CD4-positive, alpha-beta memory T cell (primary cell): ENCODE measurements at regions of chr5 and their contacts with region 1.

Region 1: GRCh38 chr5:77560677-77561263 is 68.7 kb upstream of the WDR41 start:
- DNase-seq: peak in 1 of 5 donors; percentile 4
- H3K4me3 ChIP-seq: no peak overlapping the region
- H3K4me3 Mint-ChIP-seq: no peak overlapping the region
- H3K27ac ChIP-seq: no peak overlapping the region
- H3K27ac Mint-ChIP-seq: no peak overlapping the region
- H3K4me1 ChIP-seq: no peaks in the 10 kb centered on the region
- H3K4me1 Mint-ChIP-seq: no peaks in the 10 kb centered on the region
- H3K27me3 ChIP-seq: no peaks in the 10 kb centered on the region
- H3K27me3 Mint-ChIP-seq: peaks cover 2 to 5% of the 10 kb centered on the region in 2 donors

Region 2: GRCh38 chr5:77545285-77545684 is 15.5 kb before region 1 on chr5:
- CTCF ChIA-PET with region 1: no interaction called
- POLR2A ChIA-PET with region 1: no interaction called
- intact Hi-C with region 1: no loop called
- DNase-seq: no peak
- H3K4me3 ChIP-seq: no peak overlapping the region
- H3K4me3 Mint-ChIP-seq: no peak overlapping the region
- H3K27ac ChIP-seq: no peak overlapping the region
- H3K27ac Mint-ChIP-seq: no peak overlapping the region
- H3K4me1 ChIP-seq: no peaks in the 10 kb centered on the region
- H3K4me1 Mint-ChIP-seq: no peaks in the 10 kb centered on the region
- H3K27me3 ChIP-seq: no peaks in the 10 kb centered on the region
- H3K27me3 Mint-ChIP-seq: peaks cover 8 to 21% of the 10 kb centered on the region in 2 donors

Region 3: GRCh38 chr5:77590347-77590746 is 29.6 kb after region 1 on chr5:
- CTCF ChIA-PET with region 1: no interaction called
- POLR2A ChIA-PET with region 1: no interaction called
- intact Hi-C with region 1: no loop called
- DNase-seq: no peak
- H3K4me3 ChIP-seq: no peak overlapping the region
- H3K4me3 Mint-ChIP-seq: no peak overlapping the region
- H3K27ac ChIP-seq: no peak overlapping the region
- H3K27ac Mint-ChIP-seq: no peak overlapping the region
- H3K4me1 ChIP-seq: no peaks in the 10 kb centered on the region
- H3K4me1 Mint-ChIP-seq: no peaks in the 10 kb centered on the region
- H3K27me3 ChIP-seq: no peaks in the 10 kb centered on the region
- H3K27me3 Mint-ChIP-seq: peaks cover 12 to 13% of the 10 kb centered on the region in 2 donors

Region 4: GRCh38 chr5:78269088-78269703 is 708.4 kb after region 1 on chr5:
- CTCF ChIA-PET with region 1: no interaction called
- POLR2A ChIA-PET with region 1: no interaction called
- intact Hi-C with region 1: loop called (anchors 2 kb)
- DNase-seq: peak in 3 of 5 donors; percentile 14 to 19 (median 18)
- H3K4me3 ChIP-seq: no peak overlapping the region
- H3K4me3 Mint-ChIP-seq: no peak overlapping the region
- H3K27ac ChIP-seq: no peak overlapping the region
- H3K27ac Mint-ChIP-seq: peak overlapping the region in 1 of 7 donors; percentile 25
- H3K4me1 ChIP-seq: no peaks in the 10 kb centered on the region
- H3K4me1 Mint-ChIP-seq: peaks cover 10 to 14% (median 13%) of the 10 kb centered on the region in 4 donors
- H3K27me3 ChIP-seq: no peaks in the 10 kb centered on the region
- H3K27me3 Mint-ChIP-seq: no peaks in the 10 kb centered on the region